AG04449 (cell line): ENCODE measurements at regions of chr1 and their contacts with region 1.

Region 1: DNA sequence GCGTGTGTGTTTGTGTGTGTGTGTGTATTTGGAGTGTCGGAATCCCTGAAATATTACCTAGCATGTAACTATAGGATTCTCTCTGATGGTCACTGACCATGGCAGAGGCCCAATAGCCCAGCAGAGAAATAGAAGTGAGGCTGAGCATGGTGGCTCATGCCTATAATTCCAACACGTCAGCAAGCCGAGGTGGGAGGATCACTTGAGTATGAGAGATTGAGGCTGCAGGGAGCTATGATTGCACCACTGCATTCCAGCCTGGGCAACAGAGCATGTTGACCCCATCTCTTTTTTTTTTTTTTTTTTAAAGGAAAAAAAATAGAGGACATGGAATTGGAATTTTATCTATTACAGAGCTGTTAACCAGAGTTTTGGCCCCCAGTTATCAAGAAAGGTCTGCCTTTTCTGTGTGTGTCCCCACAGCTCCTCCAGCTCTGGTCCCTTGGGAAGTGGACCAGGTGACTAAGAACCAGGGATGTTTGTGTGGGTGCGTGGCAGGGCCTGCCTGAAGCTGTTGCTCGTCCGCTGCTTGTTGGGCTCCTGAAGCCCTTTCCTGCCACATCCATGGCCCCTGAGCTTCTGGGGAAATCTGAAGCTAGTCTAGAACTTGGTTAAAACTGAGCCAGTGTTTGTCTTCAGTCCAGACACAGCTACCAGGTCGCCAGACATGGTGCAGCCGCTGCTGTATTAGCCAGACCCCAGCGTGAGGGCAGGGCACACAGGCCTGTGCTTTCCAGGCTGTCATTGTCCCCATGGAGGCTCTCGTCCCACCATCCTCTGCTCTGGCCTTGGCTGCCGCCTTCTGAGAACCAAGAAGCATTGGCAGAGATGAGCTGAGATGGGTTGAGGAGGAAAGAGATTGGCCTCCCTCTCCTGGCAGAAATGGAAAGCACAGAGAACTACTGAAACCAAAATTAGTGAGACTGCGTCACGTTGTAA is 25.5 kb downstream of the CAPN9 start:
- DNase-seq: peak; percentile 26
- H3K4me3 ChIP-seq: no peak overlapping the region
- CTCF ChIP-seq: peak; percentile 79

Region 2: GRCh38 chr1:230632273-230632873 is 140.4 kb before region 1 on chr1:
- CTCF ChIA-PET with region 1: interaction called, 18 read pairs
- POLR2A ChIA-PET with region 1: no interaction called
- DNase-seq: no peak
- H3K4me3 ChIP-seq: no peak overlapping the region
- CTCF ChIP-seq: peak; percentile 57

Region 3: DNA sequence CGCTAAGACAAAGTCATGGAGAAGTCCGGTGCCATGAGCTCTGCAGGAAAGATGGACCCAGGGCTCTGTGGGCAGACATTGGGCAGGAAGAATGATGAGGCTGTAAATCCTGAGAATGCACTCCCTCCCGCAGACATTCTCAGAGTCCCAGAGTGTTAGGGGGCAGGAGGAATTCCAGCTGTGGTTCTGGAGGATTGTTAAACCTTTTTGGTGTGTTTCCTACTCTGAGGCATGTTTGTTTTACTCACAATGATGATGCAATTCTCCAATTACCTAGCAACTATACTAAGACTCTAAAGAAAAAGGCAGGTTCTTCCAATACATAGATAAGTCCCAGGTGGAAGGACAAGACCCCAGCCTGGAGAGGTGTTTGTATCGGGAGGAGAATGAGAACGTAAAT is 28.3 kb before region 1 on chr1:
- CTCF ChIA-PET with region 1: interaction called, 10 read pairs
- POLR2A ChIA-PET with region 1: no interaction called
- DNase-seq: peak; percentile 17
- H3K4me3 ChIP-seq: no peak overlapping the region
- CTCF ChIP-seq: no peak